ENCODE measurements at regions of chr17 and their contacts with region 1.

Region 1: GRCh38 chr17:68457539-68458259 is 403 bp upstream of the WIPI1 start:
- DNase-seq: peak; percentile 99
- H3K4me3 ChIP-seq: peak overlapping the region; percentile 40 to 89 (median 76)
- H3K27ac ChIP-seq: peak overlapping the region; percentile 96 to 99 (median 98)
- H3K4me1 ChIP-seq: peaks cover 15 to 54% (median 34%) of the 10 kb centered on the region in 4 donors
- H3K27me3 ChIP-seq: no peaks in the 10 kb centered on the region
- CTCF ChIP-seq: peak in 2 of 5 experiments; percentile 27 to 32
- EP300 ChIP-seq: no peak
- POLR2A ChIP-seq: peak; percentile 85

Region 2: GRCh38 chr17:68172461-68172954 is 285.2 kb before region 1 on chr17:
- in situ Hi-C with region 1: loop called in 2 of 4 experiments (anchors 10 to 25 kb)
- intact Hi-C with region 1: loop called (anchors 10 kb)
- DNase-seq: peak; percentile 81
- H3K4me3 ChIP-seq: no peak overlapping the region
- H3K27ac ChIP-seq: no peak overlapping the region
- H3K4me1 ChIP-seq: peaks cover 0 to 3% (median 0%) of the 10 kb centered on the region in 4 donors
- H3K27me3 ChIP-seq: no peaks in the 10 kb centered on the region
- CTCF ChIP-seq: peak; percentile 94 to 99 (median 98)
- EP300 ChIP-seq: no peak
- POLR2A ChIP-seq: no peak